ENCODE measurements at regions of chr18 and their contacts with region 1.

Region 1: DNA sequence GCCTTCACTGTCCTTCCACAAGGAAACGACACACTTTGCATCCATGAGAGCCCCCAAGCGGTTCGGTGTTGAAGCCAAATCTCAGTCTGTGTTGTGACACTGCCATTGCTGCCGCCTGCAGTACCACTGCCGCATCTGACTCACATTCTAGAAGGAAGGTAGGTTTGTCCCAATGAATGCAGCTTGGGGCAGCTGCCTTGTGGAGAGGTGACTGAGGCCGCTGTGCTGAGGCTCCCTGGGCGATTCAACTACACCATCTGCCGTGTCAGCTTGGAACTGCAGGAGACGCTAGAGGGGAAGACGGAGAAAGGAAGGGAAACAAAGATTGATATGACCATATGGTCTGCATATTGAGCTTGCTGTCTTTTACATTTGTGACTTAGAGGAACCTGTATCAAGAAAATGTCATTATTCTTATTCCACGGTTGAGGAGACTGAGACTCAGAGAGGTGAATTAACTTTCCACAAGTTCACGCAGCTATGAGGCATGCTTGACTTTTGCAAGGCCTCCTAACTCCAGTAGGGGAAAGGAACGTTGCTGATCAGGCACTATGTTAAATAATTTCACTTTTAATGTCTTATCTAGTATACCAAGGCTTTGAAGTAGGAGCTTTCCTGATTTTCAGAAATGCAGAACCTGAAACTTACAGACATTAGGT is 43.5 kb upstream of the LMAN1 start:
- H3K4me3 ChIP-seq: no peak overlapping the region
- H3K27ac ChIP-seq: no peak overlapping the region
- H3K4me1 ChIP-seq: no peaks in the 10 kb centered on the region
- CTCF ChIP-seq: peak; percentile 100

Region 2: DNA sequence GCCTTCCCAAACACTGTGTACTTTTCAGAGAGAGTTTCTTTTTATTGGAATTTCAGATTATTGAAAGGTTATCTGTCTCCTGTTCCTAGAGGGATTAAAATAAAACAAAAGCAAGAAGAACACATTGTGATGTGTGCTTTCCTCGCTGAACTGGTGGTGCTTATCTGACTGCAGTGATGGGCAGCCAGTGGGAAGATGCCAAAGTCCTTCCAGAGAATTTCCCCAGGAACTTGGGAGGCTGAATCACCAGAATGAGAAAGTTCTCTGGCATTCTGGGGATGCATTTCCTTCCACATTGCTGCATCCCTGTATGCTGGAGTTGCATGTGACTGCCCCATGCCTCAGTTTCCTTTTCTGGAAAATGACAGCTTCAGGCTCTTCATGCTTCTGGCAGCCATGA is 316.8 kb before region 1 on chr18:
- CTCF ChIA-PET with region 1: interaction called, 23 read pairs
- POLR2A ChIA-PET with region 1: interaction called, 3 read pairs
- H3K4me3 ChIP-seq: no peak overlapping the region
- H3K27ac ChIP-seq: no peak overlapping the region
- H3K4me1 ChIP-seq: peaks cover 2% of the 10 kb centered on the region; the same call in 1 of the 2 replicates
- CTCF ChIP-seq: no peak

Region 3: GRCh38 chr18:59238385-59238784 is 164.2 kb before region 1 on chr18:
- CTCF ChIA-PET with region 1: interaction called, 17 read pairs
- POLR2A ChIA-PET with region 1: no interaction called
- H3K4me3 ChIP-seq: no peak overlapping the region
- H3K27ac ChIP-seq: no peak overlapping the region
- H3K4me1 ChIP-seq: no peaks in the 10 kb centered on the region
- CTCF ChIP-seq: no peak

Region 4: GRCh38 chr18:59279193-59279592 is 123.4 kb before region 1 on chr18:
- CTCF ChIA-PET with region 1: interaction called, 41 read pairs
- POLR2A ChIA-PET with region 1: no interaction called
- H3K4me3 ChIP-seq: no peak overlapping the region
- H3K27ac ChIP-seq: no peak overlapping the region
- H3K4me1 ChIP-seq: peaks cover 5% of the 10 kb centered on the region; the same call in 1 of the 2 replicates
- CTCF ChIP-seq: no peak

Region 5: GRCh38 chr18:59318460-59319050 is 84.0 kb before region 1 on chr18 and contains the start of gene CPLX4:
- CTCF ChIA-PET with region 1: interaction called, 163 read pairs
- POLR2A ChIA-PET with region 1: no interaction called
- H3K4me3 ChIP-seq: no peak within 1 kb of the TSS
- H3K27ac ChIP-seq: no peak within 1 kb of the TSS
- H3K4me1 ChIP-seq: 0 out of 2 replicates have a peak, but pooled peaks cover 3% of the 10 kb centered on the region
- CTCF ChIP-seq: no peak

Region 6: DNA sequence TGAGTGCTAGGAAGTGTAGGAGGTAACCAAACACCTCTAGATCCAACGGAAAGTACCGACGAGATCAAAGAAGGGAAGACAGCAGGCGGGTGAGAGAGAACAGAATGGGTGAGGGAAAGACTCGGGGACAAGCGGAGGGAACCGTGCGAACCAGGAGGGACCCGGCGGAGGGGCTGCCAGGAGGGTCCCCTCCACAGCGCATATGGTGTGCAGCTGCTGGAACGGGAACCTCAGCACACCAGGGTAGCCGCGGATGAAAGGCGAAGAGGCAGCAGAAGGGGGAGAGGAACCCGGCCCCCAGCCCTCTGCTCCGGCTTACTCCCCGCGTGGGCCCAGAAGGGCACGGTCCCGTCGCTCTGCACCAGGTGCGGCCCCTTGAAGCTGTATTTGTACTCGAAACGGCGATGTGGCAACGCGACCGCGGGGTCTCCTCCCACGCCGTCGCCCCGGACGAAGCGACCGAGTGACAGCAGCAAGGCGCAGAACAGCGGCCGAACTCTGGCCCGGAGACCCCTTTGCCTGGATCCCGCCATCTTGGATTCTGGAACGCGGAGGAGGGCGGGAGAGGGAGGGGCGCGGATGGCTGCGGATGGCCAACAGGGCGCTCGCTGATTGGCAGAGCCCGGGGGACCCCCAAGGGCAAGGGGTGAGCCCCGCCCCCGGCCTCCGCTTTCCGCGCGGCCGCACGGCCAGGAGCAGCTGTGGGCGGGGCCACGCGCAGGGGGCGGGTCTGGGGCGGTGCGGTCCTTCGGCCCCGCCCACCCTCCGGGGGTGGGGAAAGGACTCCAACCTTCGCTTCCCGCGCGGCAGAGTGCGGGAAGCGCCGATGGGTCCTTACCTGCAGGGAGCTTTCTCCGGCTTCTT is 43.6 kb before region 1 on chr18 and contains the start of gene LMAN1:
- CTCF ChIA-PET with region 1: interaction called, 39 read pairs
- POLR2A ChIA-PET with region 1: interaction called, 8 read pairs
- H3K4me3 ChIP-seq: peak within 1 kb of the TSS; percentile 76
- H3K27ac ChIP-seq: peak within 1 kb of the TSS; percentile 90
- H3K4me1 ChIP-seq: peaks cover 6% of the 10 kb centered on the region
- CTCF ChIP-seq: no peak

Region 7: GRCh38 chr18:59459369-59460079 is 57.0 kb after region 1 on chr18:
- CTCF ChIA-PET with region 1: interaction called, 20 read pairs
- POLR2A ChIA-PET with region 1: no interaction called
- H3K4me3 ChIP-seq: no peak overlapping the region
- H3K27ac ChIP-seq: peak overlapping the region; percentile 43; the same call in 1 of the 2 replicates
- H3K4me1 ChIP-seq: peaks cover 22% of the 10 kb centered on the region
- CTCF ChIP-seq: peak; percentile 41; the same call in 1 of the 2 replicates

Region 8: DNA sequence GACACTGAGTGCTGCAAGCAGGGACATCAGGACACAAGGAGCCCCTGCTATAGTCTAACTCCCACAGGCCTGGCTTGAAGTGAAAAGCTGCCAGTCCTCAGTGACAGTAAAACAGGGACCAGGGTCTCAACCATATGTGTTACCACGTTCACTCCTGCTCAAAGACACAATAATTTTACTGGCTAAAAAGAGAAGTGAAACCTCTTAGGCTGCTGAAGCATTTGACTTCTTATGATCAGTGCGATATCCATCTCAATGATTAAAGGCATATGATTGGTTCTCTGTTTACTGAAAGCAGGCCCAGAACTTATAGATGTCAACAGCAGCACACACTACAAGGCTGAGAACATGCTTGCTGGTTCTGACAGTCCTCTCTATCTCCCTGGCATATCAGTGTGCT is 86.3 kb after region 1 on chr18:
- CTCF ChIA-PET with region 1: no interaction called
- POLR2A ChIA-PET with region 1: no interaction called
- H3K4me3 ChIP-seq: no peak overlapping the region
- H3K27ac ChIP-seq: no peak overlapping the region
- H3K4me1 ChIP-seq: peaks cover 18% of the 10 kb centered on the region
- CTCF ChIP-seq: no peak

Measured in HEK293 (cell line).